ENCODE measurements at regions of chr9 and their contacts with region 1.

Region 1: GRCh38 chr9:134163353-134164196 is 789 bp downstream of the RNU6ATAC start:
- DNase-seq: peak; percentile 52 to 71 (median 58)
- H3K4me3 ChIP-seq: no peak overlapping the region
- H3K4me3 Mint-ChIP-seq: no peak overlapping the region
- H3K27ac ChIP-seq: no peak overlapping the region
- H3K27ac Mint-ChIP-seq: no peak overlapping the region
- H3K4me1 ChIP-seq: peaks cover 14 to 23% of the 10 kb centered on the region in 2 donors
- H3K4me1 Mint-ChIP-seq: peaks cover 19% of the 10 kb centered on the region
- H3K27me3 ChIP-seq: no peaks in the 10 kb centered on the region
- H3K27me3 Mint-ChIP-seq: peaks cover 2 to 3% (median 2%) of the 10 kb centered on the region in 3 donors
- CTCF ChIP-seq: peak; percentile 77

Region 2: DNA sequence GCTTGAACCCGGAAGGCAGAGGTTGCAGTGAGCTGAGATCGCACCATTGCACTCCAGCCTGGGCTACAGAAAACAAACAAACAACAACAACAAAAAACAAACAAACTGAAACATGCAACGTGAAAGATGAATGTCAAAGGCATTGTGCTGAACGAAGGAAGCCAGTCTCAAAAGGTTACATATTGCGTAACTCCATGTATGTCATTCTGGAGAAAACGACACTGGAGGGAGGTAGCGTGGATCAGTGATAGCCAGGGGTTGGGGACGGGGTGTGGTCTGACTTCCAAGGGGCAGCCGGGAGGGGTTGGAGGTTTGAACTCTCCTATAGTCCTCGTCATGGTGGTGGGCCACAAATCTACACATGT is 39.8 kb before region 1 on chr9:
- intact Hi-C with region 1: loop called in 1 of 2 experiments (anchors 5 kb)
- DNase-seq: peak; percentile 28 to 74 (median 67)
- H3K4me3 ChIP-seq: peak overlapping the region in 1 of 3 experiments; percentile 33
- H3K4me3 Mint-ChIP-seq: peak overlapping the region; percentile 59 to 67
- H3K27ac ChIP-seq: peak overlapping the region; percentile 72 to 80
- H3K27ac Mint-ChIP-seq: peak overlapping the region; percentile 84 to 97 (median 94)
- H3K4me1 ChIP-seq: peaks cover 23% of the 10 kb centered on the region in 2 donors
- H3K4me1 Mint-ChIP-seq: peaks cover 22% of the 10 kb centered on the region
- H3K27me3 ChIP-seq: no peaks in the 10 kb centered on the region
- H3K27me3 Mint-ChIP-seq: peaks cover 0 to under 1% (median 0%) of the 10 kb centered on the region in 3 donors
- CTCF ChIP-seq: no peak

Region 3: GRCh38 chr9:134135343-134136118 is 28.0 kb before region 1 on chr9 and contains the start of gene WDR5:
- intact Hi-C with region 1: loop called in 1 of 2 experiments (anchors 1 kb)
- DNase-seq: peak; percentile 84 to 87 (median 84)
- H3K4me3 ChIP-seq: peak within 1 kb of the TSS; percentile 71 to 100 (median 99)
- H3K4me3 Mint-ChIP-seq: peak within 1 kb of the TSS; percentile 90 to 98
- H3K27ac ChIP-seq: peak within 1 kb of the TSS; percentile 56 to 72
- H3K27ac Mint-ChIP-seq: peak within 1 kb of the TSS; percentile 70 to 87 (median 82)
- H3K4me1 ChIP-seq: peaks cover 35 to 43% of the 10 kb centered on the region in 2 donors
- H3K4me1 Mint-ChIP-seq: peaks cover 43% of the 10 kb centered on the region
- H3K27me3 ChIP-seq: no peaks in the 10 kb centered on the region
- H3K27me3 Mint-ChIP-seq: peaks cover 0 to 1% (median 0%) of the 10 kb centered on the region in 3 donors
- CTCF ChIP-seq: no peak
- polyA plus RNA-seq, gene WDR5: 8.7 to 17.3 (median 10.2) TPM

Region 4: DNA sequence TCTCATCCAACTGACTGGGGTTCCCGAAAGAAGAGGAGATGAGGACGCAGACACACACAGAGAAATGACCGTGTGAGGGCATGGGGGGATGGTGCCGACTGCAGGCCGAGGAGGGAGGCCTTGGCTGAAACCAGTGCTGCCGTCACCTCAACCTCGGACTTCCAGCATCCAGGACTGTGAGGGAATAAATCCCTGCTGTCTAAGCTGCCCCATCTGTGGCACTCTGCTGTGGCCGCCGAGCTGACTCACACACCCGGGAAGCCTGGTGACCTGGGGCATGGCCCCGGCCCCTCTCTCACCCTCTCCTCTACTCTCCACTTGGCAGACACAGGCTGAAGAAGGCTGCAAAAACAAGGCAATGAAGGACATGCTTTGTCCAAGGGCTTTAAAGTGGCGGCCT is 473.7 kb after region 1 on chr9:
- intact Hi-C with region 1: no loop called
- DNase-seq: no peak
- H3K4me3 ChIP-seq: no peak overlapping the region
- H3K4me3 Mint-ChIP-seq: no peak overlapping the region
- H3K27ac ChIP-seq: no peak overlapping the region
- H3K27ac Mint-ChIP-seq: no peak overlapping the region
- H3K4me1 ChIP-seq: no peaks in the 10 kb centered on the region
- H3K4me1 Mint-ChIP-seq: peaks cover 2% of the 10 kb centered on the region
- H3K27me3 ChIP-seq: peaks cover 8 to 16% of the 10 kb centered on the region in 2 donors
- H3K27me3 Mint-ChIP-seq: peaks cover 14 to 29% (median 16%) of the 10 kb centered on the region in 3 donors
- CTCF ChIP-seq: no peak

Measured in CD14-positive monocyte (primary cell).